A549 (cell line): ENCODE measurements at regions of chr17 and their contacts with region 1.

Region 1: DNA sequence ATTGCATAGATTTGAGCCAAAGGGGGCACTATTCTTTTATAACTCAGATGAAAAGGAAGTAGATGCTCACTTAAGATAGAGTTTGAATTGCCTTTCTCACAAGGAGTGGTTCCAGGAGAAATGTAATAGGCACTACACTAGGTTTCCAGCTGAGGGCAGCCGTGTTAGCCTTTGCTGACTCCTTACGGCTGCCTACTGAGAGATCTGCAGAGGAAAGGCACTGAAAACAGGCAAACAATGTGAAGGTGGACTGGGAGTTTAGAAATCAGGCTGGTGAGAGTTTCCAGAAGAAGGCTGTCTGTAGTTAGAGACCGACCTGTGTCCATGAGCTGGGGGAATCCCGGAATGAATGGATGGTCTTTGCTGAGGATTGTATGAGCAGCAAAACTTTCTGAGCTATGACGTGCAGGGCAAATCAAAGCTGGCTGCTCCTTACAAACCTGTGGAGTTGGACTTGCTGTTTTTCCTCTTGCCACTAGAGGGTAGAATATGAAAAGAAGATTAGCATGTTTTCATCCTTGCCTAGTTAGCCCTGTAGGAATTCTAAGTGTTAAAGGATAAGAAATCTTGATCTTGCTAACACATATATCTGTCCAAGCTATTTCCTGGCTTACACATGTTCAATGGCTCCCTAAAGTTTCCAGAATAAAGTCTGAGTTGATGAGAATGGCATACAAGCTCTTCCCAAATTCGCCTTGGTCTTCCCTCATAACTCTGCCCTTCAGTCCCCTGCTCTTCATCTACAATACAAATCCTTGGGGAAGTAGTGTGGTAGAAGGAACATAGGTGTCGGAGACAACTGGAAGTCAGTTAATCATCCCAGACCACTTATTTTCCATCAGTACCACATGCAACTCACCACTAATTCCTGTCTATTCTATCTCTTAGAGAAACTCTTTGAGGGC is 20.1 kb upstream of the TAOK1 start:
- DNase-seq: peak; percentile 89 to 93
- ATAC-seq: peak; percentile 97 to 99
- H3K4me3 ChIP-seq: no peak overlapping the region; the same call in 2 of the 3 replicates
- H3K27ac ChIP-seq: peak overlapping the region; percentile 20 to 63; a peak in 4 of 6 replicates
- H3K4me1 ChIP-seq: peaks cover 14% of the 10 kb centered on the region
- CTCF ChIP-seq: peak; percentile 94
- EP300 ChIP-seq: no peak
- POLR2A ChIP-seq: no peak
- RAD21 ChIP-seq: peak; percentile 82 to 89

Region 2: GRCh38 chr17:29111816-29112499 is 258.1 kb before region 1 on chr17:
- CTCF ChIA-PET with region 1: no interaction called
- POLR2A ChIA-PET with region 1: no interaction called
- DNase-seq: peak; percentile 65 to 73
- ATAC-seq: peak; percentile 70 to 83
- H3K4me3 ChIP-seq: no peak overlapping the region
- H3K27ac ChIP-seq: no peak overlapping the region
- H3K4me1 ChIP-seq: peaks cover 17% of the 10 kb centered on the region
- CTCF ChIP-seq: peak; percentile 89
- EP300 ChIP-seq: no peak
- POLR2A ChIP-seq: no peak
- RAD21 ChIP-seq: peak; percentile 78 to 83

Region 3: GRCh38 chr17:29293890-29294579 is 76.0 kb before region 1 on chr17 and contains the start of gene NUFIP2:
- CTCF ChIA-PET with region 1: interaction called, 4 read pairs
- POLR2A ChIA-PET with region 1: interaction called, 14 read pairs
- DNase-seq: peak; percentile 99 to 100
- ATAC-seq: peak; percentile 83 to 97
- H3K4me3 ChIP-seq: peak within 1 kb of the TSS; percentile 72
- H3K27ac ChIP-seq: peak within 1 kb of the TSS; percentile 91 to 98
- H3K4me1 ChIP-seq: peaks cover 25% of the 10 kb centered on the region
- CTCF ChIP-seq: no peak
- EP300 ChIP-seq: no peak
- POLR2A ChIP-seq: peak; percentile 99
- RAD21 ChIP-seq: 0 out of 5 replicates have a peak, but pooled peaks have one; percentile 3 to 15
- polyA plus RNA-seq, gene NUFIP2: 29.4 and 34.7 TPM in 2 replicates

Region 4: GRCh38 chr17:29412780-29413565 is 42.9 kb after region 1 on chr17:
- CTCF ChIA-PET with region 1: interaction called, 14 read pairs
- POLR2A ChIA-PET with region 1: no interaction called
- DNase-seq: no peak
- ATAC-seq: peak in 1 of 2 experiments; percentile 37; a peak in 2 of 6 replicates
- H3K4me3 ChIP-seq: no peak overlapping the region
- H3K27ac ChIP-seq: 0 out of 6 replicates have a peak overlapping the region, but pooled peaks of 1 of the 2 experiments have one; percentile 3
- H3K4me1 ChIP-seq: peaks cover 13% of the 10 kb centered on the region
- CTCF ChIP-seq: no peak
- EP300 ChIP-seq: no peak
- POLR2A ChIP-seq: no peak
- RAD21 ChIP-seq: no peak

Region 5: GRCh38 chr17:29504711-29505110 is 134.6 kb after region 1 on chr17:
- CTCF ChIA-PET with region 1: interaction called, 14 read pairs
- POLR2A ChIA-PET with region 1: no interaction called
- DNase-seq: no peak
- ATAC-seq: no peak
- H3K4me3 ChIP-seq: no peak overlapping the region
- H3K27ac ChIP-seq: no peak overlapping the region
- H3K4me1 ChIP-seq: no peaks in the 10 kb centered on the region
- CTCF ChIP-seq: no peak
- EP300 ChIP-seq: no peak
- POLR2A ChIP-seq: no peak
- RAD21 ChIP-seq: no peak

Region 6: DNA sequence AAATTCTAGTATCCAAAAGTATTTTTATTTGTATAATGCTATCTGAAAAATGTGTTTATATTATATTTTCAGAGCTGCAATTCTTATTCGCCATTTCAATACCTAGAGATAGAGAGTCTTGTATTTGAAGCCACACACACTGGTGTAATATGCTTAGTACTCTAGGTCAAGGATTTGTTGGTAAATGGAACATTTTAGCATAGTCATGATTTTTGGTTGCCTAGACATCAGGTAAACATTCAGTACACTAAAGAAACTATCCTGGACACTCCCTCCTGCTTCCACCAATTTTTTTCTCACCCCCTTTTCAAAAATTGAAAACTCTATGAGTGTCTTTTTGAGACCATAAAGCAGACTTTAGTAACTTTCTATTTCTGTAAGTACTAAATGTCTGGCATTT is 176.0 kb after region 1 on chr17:
- CTCF ChIA-PET with region 1: interaction called, 13 read pairs
- POLR2A ChIA-PET with region 1: no interaction called
- DNase-seq: peak; percentile 34 to 67
- ATAC-seq: peak; percentile 59 to 80; a peak in 4 of 6 replicates
- H3K4me3 ChIP-seq: no peak overlapping the region
- H3K27ac ChIP-seq: no peak overlapping the region
- H3K4me1 ChIP-seq: peaks cover 29% of the 10 kb centered on the region
- CTCF ChIP-seq: no peak
- EP300 ChIP-seq: no peak
- POLR2A ChIP-seq: no peak
- RAD21 ChIP-seq: no peak

Region 7: DNA sequence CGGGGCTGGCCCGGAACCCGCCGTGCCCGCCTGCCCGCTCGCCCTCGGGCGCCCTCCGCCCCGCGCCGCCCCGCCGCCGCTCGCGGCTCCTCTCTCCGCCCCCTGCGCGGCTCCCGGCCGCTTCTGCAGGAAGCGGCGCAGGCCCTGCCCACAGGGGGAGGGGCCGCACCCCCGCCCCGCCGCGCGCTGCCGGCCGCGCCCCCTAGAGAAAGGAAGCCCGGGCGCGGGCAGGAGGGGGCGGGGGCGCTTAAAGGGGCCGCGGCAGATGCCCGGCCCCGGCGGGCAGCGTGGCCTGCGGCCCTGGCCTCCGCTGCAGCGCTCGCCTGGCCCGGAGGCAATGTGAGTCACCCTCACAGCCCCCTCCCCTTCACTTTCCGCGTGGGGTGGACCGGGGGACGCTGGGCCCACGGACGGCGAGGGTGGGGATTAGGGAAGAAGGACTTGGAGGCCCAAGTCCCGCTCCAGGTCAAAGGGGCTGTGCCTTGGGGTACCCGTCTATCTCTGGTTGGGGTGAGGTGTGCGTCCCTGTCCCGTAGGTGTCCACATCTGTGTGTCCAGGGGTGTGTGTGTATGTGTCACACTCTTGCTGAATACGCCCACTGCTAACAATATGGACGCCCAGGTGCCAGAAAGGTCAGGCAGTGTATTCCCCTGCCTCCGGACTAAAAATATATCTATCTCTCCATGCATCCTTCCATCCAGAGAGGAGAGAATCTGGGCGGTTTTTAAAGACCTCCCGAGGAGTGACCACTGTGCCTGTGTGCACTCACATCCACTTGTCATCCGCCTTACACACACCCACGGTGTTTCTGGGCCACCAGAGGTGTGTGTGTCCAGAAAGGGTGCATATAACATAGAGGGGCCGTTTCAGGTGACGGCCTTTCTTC is 219.7 kb after region 1 on chr17 and contains the start of gene GIT1:
- CTCF ChIA-PET with region 1: interaction called, 77 read pairs
- POLR2A ChIA-PET with region 1: interaction called, 8 read pairs
- DNase-seq: peak; percentile 85 to 92
- ATAC-seq: peak; percentile 21 to 40
- H3K4me3 ChIP-seq: peak within 1 kb of the TSS; percentile 82
- H3K27ac ChIP-seq: peak within 1 kb of the TSS; percentile 95 to 96
- H3K4me1 ChIP-seq: peaks cover 56% of the 10 kb centered on the region
- CTCF ChIP-seq: no peak
- EP300 ChIP-seq: no peak
- POLR2A ChIP-seq: peak; percentile 63
- RAD21 ChIP-seq: no peak
- polyA plus RNA-seq, gene GIT1: 53.0 and 56.8 TPM in 2 replicates